PC-9 (cell line): ENCODE measurements at regions of chr2 and their contacts with region 1.

Region 1: DNA sequence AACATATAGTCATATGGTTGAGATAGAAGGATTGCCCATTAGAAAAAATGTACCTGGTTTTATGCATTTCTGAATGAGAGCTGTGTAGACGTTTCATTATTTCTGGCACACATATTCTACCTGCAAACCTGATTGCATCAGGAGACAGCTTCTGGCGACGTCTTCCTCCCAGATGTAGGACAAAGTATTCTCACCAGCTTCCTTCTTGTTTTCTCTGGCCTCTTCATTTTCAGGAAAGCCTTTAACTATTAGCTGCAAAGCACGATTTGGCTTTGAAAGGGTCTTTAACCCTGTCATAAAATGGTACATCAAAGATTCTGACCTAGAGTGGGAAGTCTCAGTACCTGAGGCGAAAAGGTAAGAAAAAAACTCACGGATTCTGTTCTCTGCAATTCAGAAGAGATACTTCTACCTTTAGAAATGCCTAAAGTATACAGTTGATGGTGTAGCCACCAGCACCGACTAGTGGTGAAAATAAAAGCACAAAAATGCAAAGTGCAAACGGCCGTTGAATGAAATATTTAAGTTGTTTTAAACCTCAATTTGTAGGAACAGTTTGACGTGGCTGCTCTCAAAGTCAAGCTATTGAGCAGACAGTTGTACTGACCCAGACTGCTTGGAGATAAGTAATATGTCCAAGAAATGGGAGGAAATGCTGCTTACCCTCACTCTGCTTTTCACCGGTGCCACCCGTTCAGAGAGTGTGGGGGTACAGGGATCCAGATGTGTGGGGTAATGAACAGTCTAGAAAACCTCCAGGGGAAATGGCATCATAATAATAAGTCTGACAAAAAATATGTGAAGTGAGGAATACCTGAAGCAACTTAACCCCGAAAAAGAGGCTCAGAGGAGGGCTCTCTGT is 20.2 kb downstream of the IL18RAP start:
- DNase-seq: peak in 1 of 2 experiments; percentile 39
- H3K4me3 ChIP-seq: no peak overlapping the region
- H3K27ac ChIP-seq: no peak overlapping the region
- H3K4me1 ChIP-seq: peaks cover 8% of the 10 kb centered on the region; the same call in 1 of the 2 replicates
- H3K27me3 ChIP-seq: no peaks in the 10 kb centered on the region
- CTCF ChIP-seq: peak; percentile 84

Region 2: DNA sequence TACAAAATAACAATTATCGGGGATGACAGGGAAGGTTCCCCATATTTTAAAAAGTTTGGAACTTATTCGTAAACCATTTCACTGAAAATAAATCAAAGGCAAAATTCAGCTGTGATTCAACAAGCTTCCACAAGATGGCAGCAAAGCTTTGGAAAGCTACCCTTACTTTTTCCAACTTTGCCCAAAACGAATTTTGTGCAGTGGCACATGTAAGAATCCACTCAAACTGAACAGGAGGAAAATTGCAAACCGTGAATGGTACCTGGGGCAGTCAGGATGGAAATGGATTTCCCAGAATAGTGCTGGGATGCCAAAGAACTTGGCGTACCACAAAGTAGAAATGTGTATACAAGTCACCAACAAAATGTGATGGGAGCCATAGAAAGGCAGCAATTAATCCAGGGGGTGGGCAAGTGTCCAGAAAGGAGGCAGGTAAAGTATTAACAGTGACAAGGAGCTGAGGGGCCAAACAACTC is 1430.5 kb before region 1 on chr2:
- CTCF ChIA-PET with region 1: no interaction called
- POLR2A ChIA-PET with region 1: no interaction called
- intact Hi-C with region 1: loop called (anchors 10 kb)
- DNase-seq: peak; percentile 19 to 39
- H3K4me3 ChIP-seq: no peak overlapping the region
- H3K27ac ChIP-seq: no peak overlapping the region; the same call in 1 of the 2 replicates
- H3K4me1 ChIP-seq: no peaks in the 10 kb centered on the region
- H3K27me3 ChIP-seq: no peaks in the 10 kb centered on the region
- CTCF ChIP-seq: peak; percentile 91

Region 3: GRCh38 chr2:101883863-101884262 is 559.3 kb before region 1 on chr2:
- CTCF ChIA-PET with region 1: interaction called, 5 read pairs
- POLR2A ChIA-PET with region 1: no interaction called
- intact Hi-C with region 1: loop called (anchors 2 kb)
- DNase-seq: peak; percentile 7 to 41
- H3K4me3 ChIP-seq: no peak overlapping the region
- H3K27ac ChIP-seq: no peak overlapping the region
- H3K4me1 ChIP-seq: peaks cover 9% of the 10 kb centered on the region; the same call in 1 of the 2 replicates
- H3K27me3 ChIP-seq: no peaks in the 10 kb centered on the region
- CTCF ChIP-seq: peak; percentile 74

Region 4: GRCh38 chr2:102166189-102166845 is 276.9 kb before region 1 on chr2:
- CTCF ChIA-PET with region 1: no interaction called
- POLR2A ChIA-PET with region 1: no interaction called
- intact Hi-C with region 1: loop called (anchors 10 kb)
- DNase-seq: no peak
- H3K4me3 ChIP-seq: no peak overlapping the region
- H3K27ac ChIP-seq: no peak overlapping the region
- H3K4me1 ChIP-seq: peaks cover 17% of the 10 kb centered on the region
- H3K27me3 ChIP-seq: no peaks in the 10 kb centered on the region
- CTCF ChIP-seq: peak; percentile 60

Region 5: GRCh38 chr2:102355526-102356380 is 87.4 kb before region 1 on chr2 and contains the start of gene IL18R1:
- CTCF ChIA-PET with region 1: no interaction called
- POLR2A ChIA-PET with region 1: no interaction called
- intact Hi-C with region 1: loop called (anchors 2 kb)
- DNase-seq: peak; percentile 58 to 80
- H3K4me3 ChIP-seq: peak within 1 kb of the TSS; percentile 89
- H3K27ac ChIP-seq: peak within 1 kb of the TSS; percentile 53
- H3K4me1 ChIP-seq: peaks cover 38% of the 10 kb centered on the region
- H3K27me3 ChIP-seq: no peaks in the 10 kb centered on the region
- CTCF ChIP-seq: peak; percentile 82
- total RNA-seq, gene IL18R1: 1.9 and 3.4 TPM in 2 replicates